Activated CD4-positive, alpha-beta memory T cell treated with anti-CD3 and anti-CD28 coated beads, Interleukin-2, amount 10 ng/mL, durations not matched to agents 7 days and 5 days (primary cell): ENCODE measurements at regions of chr14 and their contacts with region 1.

Region 1: DNA sequence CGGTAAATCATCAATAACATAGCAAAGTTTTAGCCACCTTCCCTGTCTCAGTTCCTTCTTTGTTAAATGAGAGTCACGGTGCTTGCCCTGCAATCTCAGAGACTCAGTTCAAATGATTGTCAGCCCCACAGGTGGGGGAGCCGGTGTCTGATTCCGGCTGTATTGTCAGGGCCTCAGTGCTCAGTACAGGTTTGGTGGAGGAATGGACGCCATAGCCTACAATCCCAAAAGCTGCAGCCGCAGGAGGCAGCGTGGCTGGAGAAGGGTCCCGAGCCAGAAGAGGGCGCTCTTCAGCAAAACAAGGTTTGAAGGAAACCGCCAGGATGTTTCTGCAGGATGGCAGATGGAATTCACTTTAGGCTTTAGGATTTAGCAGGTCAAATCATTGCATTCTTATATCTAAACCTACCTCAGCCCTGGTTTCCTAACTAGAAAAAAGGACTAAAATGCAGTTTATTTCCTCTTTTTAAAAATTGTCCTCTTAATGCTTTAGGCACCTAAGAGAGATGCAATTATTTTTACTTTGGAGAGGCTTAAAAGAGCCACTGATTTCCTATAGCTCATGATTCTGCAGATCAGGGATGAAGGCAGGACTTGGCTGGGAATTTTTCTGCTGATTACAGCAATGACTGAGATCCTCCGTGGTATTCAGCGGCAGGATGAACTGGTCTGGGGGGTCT is 29.2 kb downstream of the FOS start:
- DNase-seq: peak; percentile 73
- H3K4me3 Mint-ChIP-seq: no peak overlapping the region
- H3K27ac Mint-ChIP-seq: no peak overlapping the region
- H3K4me1 Mint-ChIP-seq: peaks cover 23% of the 10 kb centered on the region
- H3K27me3 Mint-ChIP-seq: no peaks in the 10 kb centered on the region

Region 2: DNA sequence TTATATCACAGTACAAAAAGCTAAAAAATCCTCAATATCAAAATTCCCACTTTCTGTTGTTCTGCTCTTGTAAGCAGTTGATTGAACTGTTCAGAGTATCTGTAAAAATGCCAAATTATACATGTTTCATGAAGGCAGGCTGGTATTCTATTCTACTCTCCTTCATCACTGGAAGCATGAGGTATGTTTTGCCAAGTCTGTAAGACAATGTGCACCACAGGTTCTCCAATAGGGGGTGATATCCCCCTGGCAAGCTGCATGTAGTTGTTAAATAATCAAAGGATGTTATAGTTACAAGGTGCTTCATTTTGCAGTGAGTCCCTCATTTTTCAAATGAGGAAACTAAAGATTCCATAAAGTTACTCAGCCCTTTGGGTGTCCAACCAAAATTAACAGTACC is 165.9 kb before region 1 on chr14:
- CTCF ChIA-PET with region 1: interaction called, 14 read pairs
- POLR2A ChIA-PET with region 1: no interaction called
- DNase-seq: peak; percentile 31
- H3K4me3 Mint-ChIP-seq: no peak overlapping the region
- H3K27ac Mint-ChIP-seq: no peak overlapping the region
- H3K4me1 Mint-ChIP-seq: peaks cover 58% of the 10 kb centered on the region
- H3K27me3 Mint-ChIP-seq: no peaks in the 10 kb centered on the region

Region 3: GRCh38 chr14:75258615-75259466 is 49.0 kb before region 1 on chr14:
- CTCF ChIA-PET with region 1: no interaction called
- POLR2A ChIA-PET with region 1: no interaction called
- DNase-seq: peak; percentile 99
- H3K4me3 Mint-ChIP-seq: peak overlapping the region; percentile 76
- H3K27ac Mint-ChIP-seq: peak overlapping the region; percentile 68
- H3K4me1 Mint-ChIP-seq: peaks cover 23% of the 10 kb centered on the region
- H3K27me3 Mint-ChIP-seq: peaks cover 42% of the 10 kb centered on the region

Region 4: GRCh38 chr14:75274899-75275569 is 32.8 kb before region 1 on chr14:
- CTCF ChIA-PET with region 1: no interaction called
- POLR2A ChIA-PET with region 1: no interaction called
- DNase-seq: peak; percentile 45
- H3K4me3 Mint-ChIP-seq: no peak overlapping the region
- H3K27ac Mint-ChIP-seq: no peak overlapping the region
- H3K4me1 Mint-ChIP-seq: peaks cover 40% of the 10 kb centered on the region
- H3K27me3 Mint-ChIP-seq: peaks cover 68% of the 10 kb centered on the region

Region 5: GRCh38 chr14:75322746-75323145 is 14.9 kb after region 1 on chr14:
- CTCF ChIA-PET with region 1: interaction called, 11 read pairs
- POLR2A ChIA-PET with region 1: no interaction called
- DNase-seq: no peak
- H3K4me3 Mint-ChIP-seq: no peak overlapping the region
- H3K27ac Mint-ChIP-seq: no peak overlapping the region
- H3K4me1 Mint-ChIP-seq: no peaks in the 10 kb centered on the region
- H3K27me3 Mint-ChIP-seq: peaks cover 19% of the 10 kb centered on the region

Region 6: DNA sequence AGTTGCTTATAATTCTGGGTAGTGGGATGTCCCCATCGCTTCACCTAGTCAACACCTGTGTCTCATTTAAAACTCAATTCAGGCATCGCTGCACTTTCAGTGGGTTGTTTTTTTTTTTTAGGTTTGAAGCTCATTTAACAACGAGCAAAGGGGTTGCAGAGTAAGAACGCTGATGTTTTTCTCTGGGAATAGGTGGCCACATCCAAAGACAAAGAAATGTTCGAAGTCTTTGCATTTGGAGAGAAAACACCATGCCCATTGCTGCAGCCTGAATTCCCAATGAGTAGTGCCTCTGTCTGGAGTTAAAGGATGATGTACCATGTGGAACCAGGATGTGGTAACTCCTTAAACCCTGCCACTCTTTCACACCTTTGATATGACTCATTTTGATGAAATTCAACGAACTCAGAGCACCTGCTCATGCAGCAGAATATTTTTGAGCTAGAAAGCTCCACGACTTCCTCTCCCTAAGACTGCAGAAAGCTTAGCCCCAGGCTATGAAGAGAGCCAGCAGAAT is 179.4 kb after region 1 on chr14:
- CTCF ChIA-PET with region 1: interaction called, 41 read pairs
- POLR2A ChIA-PET with region 1: interaction called, 4 read pairs
- DNase-seq: peak; percentile 40
- H3K4me3 Mint-ChIP-seq: no peak overlapping the region
- H3K27ac Mint-ChIP-seq: peak overlapping the region; percentile 61
- H3K4me1 Mint-ChIP-seq: peaks cover 39% of the 10 kb centered on the region
- H3K27me3 Mint-ChIP-seq: no peaks in the 10 kb centered on the region

Region 7: GRCh38 chr14:75497191-75497590 is 189.4 kb after region 1 on chr14:
- CTCF ChIA-PET with region 1: interaction called, 12 read pairs
- POLR2A ChIA-PET with region 1: interaction called, 4 read pairs
- DNase-seq: peak; percentile 44
- H3K4me3 Mint-ChIP-seq: peak overlapping the region; percentile 31
- H3K27ac Mint-ChIP-seq: peak overlapping the region; percentile 76
- H3K4me1 Mint-ChIP-seq: peaks cover 55% of the 10 kb centered on the region
- H3K27me3 Mint-ChIP-seq: no peaks in the 10 kb centered on the region

Region 8: DNA sequence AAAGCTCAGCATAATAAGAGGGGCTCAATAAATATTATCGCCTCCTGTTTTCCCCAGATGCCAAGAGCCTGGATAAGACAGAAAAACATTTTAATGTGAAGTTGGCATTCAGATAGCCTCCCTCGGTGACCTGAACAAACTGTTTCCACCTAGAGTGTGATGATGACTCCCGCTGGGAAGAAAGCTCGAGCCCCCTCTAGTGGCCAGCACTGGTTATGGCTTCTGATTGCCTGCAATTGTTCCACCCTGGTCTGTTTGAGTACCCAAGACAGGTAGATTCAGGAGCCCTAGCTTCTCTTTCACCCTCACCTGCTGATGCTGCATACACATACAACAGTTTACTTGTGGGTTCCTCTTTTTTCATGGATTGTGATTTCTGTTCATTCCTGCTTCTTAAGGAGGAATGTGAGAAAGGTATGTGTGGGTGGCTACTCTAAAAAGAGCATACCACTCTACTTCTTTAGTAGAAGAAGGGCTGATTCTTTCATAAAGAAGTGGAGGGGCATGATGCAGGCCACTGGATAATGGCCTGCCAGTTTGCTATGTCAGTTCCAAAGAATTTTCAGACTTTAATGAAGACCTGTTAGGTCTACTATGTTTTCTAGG is 346.4 kb after region 1 on chr14:
- CTCF ChIA-PET with region 1: interaction called, 18 read pairs
- POLR2A ChIA-PET with region 1: no interaction called
- DNase-seq: peak; percentile 83
- H3K4me3 Mint-ChIP-seq: no peak overlapping the region
- H3K27ac Mint-ChIP-seq: no peak overlapping the region
- H3K4me1 Mint-ChIP-seq: peaks cover 13% of the 10 kb centered on the region
- H3K27me3 Mint-ChIP-seq: no peaks in the 10 kb centered on the region